Tibial artery (tissue), 4 donors: ENCODE measurements at regions of chr1 and their contacts with region 1.

Region 1: DNA sequence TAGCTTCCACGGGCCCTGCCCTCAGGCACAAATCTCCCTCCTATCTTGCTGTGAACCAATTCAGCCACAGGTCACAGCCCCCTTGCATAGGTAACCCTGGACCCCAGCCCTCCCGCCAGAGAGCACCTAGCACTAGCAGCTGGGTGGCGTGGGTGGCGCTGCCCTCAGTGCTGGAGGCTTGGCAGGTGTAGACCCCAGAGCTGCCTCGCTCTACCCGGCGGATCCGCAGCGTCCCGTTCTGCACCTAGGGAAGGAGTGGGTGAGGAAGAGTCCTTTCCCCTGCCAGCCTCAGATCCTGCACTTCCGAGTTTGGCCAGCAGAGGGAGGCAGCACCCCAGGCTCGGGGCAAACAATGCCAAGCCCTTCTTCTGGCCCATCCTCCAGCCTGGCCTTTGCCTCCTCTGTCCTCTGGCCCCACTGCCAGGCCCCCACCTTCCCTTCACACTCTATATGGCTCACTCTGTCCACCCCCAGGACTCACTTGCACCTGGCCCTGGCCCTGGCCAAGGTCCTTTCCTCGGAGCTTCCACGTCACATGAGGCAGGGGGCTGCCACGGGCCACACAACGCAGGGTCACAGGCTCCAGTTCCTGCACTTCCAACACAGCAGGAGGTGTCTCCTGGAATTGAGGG is 9.0 kb downstream of the IGSF9 start:
- DNase-seq: peak in 1 of 2 donors; percentile 51
- H3K4me3 ChIP-seq: no peak overlapping the region
- H3K27ac ChIP-seq: no peak overlapping the region
- H3K4me1 ChIP-seq: peaks cover 0 to 15% (median 4%) of the 10 kb centered on the region in 4 donors
- H3K27me3 ChIP-seq: peaks cover 0 to 37% of the 10 kb centered on the region in 2 donors
- CTCF ChIP-seq: peak; percentile 95 to 99

Region 2: DNA sequence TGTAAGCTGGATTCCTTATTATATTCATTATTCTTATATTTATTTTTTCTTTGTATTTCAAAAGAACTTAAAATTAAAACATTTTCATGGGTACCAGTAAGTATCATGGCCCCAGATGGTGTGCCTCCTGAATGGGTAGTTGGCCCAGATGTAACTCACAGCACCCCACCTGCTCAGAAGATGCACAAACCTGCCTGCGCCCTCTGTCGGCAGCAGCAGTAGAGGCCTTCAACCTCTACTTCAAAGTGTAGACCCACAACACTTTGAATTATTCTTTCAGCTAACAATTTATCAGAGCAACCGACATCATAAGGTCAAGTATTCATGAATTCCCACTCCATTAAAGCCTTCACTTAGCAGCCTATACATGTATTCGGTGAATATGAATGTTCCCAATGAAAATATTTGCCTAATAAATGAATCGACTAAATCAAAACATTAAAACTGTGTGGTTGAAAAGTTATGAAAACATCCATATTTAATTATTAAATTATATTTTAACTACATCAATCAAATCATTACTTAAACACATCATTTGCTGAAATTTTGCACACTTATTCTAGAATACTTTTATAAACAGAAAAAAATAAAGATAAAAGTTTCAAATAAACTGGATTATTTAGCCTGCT is 70.0 kb after region 1 on chr1:
- intact Hi-C with region 1: loop called (anchors 5 kb)
- DNase-seq: peak in 1 of 2 donors; percentile 50
- H3K4me3 ChIP-seq: no peak overlapping the region
- H3K27ac ChIP-seq: no peak overlapping the region
- H3K4me1 ChIP-seq: no peaks in the 10 kb centered on the region
- H3K27me3 ChIP-seq: no peaks in the 10 kb centered on the region
- CTCF ChIP-seq: peak; percentile 55 to 64